Activated CD8-positive, alpha-beta T cell treated with anti-CD3 and anti-CD28 coated beads for 36 hours (primary cell): ENCODE measurements at regions of chr19 and their contacts with region 1.

Region 1: GRCh38 chr19:55503502-55504251 is 15.4 kb downstream of the SSC5D start:
- DNase-seq: peak; percentile 92
- ATAC-seq: peak; percentile 96
- H3K4me3 Mint-ChIP-seq: peak overlapping the region; percentile 70
- H3K27ac Mint-ChIP-seq: peak overlapping the region; percentile 78
- H3K4me1 Mint-ChIP-seq: peaks cover 23% of the 10 kb centered on the region
- H3K27me3 Mint-ChIP-seq: peaks cover 3% of the 10 kb centered on the region
- CTCF ChIP-seq: peak; percentile 99

Region 2: DNA sequence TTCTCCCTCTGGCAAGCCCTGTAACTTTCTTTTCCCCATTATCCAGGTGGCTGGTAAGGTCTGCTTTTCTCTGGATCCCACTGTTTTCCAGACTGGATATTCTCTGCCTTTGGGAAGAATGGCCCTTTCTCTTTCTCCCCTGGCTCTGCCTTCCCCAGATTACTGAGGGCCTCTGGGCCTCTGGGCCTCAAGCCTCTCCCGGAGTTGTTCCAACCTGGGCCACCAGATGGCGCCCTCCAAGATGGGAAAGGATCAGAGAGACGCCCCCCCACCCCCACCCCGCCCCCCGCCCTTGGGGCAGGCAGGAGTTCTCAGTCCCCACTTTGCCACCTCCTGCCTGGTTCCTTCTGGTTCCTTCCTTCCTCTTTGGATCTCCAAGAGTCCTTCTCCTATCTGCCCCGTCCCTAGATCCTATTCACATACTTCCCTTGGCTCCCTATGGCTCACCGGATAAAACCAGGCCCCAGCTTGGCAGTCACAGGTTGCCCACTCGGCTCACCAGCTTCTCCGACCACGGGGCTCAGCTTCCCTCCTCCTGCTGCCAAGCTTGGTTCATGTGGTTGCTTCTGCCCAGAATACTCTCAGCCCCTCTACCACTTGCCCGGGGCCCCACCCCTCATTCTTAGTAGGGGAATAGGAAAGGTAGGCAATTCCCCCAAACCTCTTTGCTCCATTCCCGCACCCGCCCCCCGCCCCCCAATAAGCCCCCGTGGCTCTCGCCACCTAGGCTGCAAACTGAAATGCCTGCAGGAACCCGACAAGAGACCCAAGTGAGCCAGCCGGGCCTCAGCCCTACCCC is 414.9 kb before region 1 on chr19:
- CTCF ChIA-PET with region 1: interaction called, 13 read pairs
- POLR2A ChIA-PET with region 1: no interaction called
- intact Hi-C with region 1: no loop called
- DNase-seq: peak; percentile 89
- ATAC-seq: peak; percentile 59
- H3K4me3 Mint-ChIP-seq: no peak overlapping the region
- H3K27ac Mint-ChIP-seq: no peak overlapping the region
- H3K4me1 Mint-ChIP-seq: peaks cover 14% of the 10 kb centered on the region
- H3K27me3 Mint-ChIP-seq: peaks cover 38% of the 10 kb centered on the region
- CTCF ChIP-seq: peak; percentile 97

Region 3: DNA sequence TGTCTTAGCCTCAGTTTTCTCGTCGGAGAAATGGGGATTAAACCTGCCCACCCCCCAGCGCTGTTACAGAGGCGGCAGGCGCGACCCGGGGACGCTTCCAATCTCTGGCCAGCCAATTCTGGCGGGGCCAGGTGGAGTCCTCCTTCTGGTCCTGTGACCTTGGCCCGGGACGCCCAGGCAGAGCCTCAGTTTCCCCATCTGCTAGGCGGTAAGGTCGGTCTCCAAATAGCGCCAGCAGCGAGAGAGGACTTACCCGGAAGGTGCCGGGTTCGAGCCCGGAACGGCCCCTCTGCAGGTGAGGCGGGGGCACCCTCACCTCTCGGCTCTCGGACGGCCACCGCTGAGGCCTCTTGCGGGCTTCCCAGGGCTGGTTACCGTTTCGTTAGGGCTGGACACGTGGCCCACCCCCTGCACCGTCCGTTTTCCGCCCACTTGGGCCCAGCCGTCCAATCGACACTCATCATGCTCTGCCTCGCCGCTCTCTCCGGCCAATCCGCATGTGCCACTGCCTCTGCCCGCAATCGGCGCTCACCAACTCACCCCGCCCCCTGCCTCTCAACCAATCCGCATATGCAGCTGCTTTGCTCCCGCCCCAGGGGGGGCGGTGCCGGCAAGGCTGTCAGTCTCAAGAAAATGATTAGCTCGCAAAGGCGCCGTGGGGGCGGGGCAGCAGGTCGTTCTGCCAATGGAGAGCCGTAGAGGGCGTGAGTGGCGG is 42.3 kb before region 1 on chr19 and contains the start of gene ISOC2:
- CTCF ChIA-PET with region 1: interaction called, 77 read pairs
- POLR2A ChIA-PET with region 1: interaction called, 3 read pairs
- intact Hi-C with region 1: loop called (anchors 5 kb)
- DNase-seq: peak; percentile 100
- ATAC-seq: peak; percentile 98
- H3K4me3 Mint-ChIP-seq: peak within 1 kb of the TSS; percentile 86
- H3K27ac Mint-ChIP-seq: peak within 1 kb of the TSS; percentile 84
- H3K4me1 Mint-ChIP-seq: peaks cover 15% of the 10 kb centered on the region
- H3K27me3 Mint-ChIP-seq: no peaks in the 10 kb centered on the region
- CTCF ChIP-seq: no peak
- total RNA-seq, gene ISOC2: 29.0 to 29.3 TPM

Region 4: DNA sequence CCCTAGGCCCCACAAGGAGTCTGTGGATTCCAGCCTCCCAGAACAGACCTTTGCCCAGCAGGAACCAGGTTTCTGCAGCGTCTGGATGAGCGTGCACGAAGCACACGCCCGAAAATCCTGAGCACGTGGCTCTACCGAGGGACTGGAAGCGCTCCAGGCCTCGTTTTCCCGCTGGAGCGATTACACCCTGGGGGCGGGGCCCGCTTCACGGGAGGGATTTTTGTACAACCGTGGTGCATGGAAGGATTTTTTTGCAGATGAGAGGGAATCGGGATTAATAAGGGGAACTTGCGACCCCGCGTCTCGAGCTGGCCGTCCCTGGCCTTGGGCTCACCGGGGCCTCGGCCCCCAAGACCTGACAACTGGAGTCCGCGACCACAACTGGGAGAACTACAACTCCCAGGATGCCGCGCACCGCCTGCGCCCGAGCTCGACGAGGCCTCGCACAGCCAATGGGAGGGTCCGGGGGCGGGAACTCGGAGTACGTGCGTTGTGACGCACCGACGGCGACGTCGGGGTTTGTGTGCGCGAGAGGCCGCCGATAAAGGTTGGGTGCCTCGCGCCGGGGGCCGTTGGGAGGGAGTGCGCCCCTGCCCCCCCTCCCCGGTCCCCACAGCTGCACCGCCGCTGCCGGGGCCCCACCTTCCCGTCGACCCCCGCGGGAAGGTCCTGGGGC is 27.4 kb before region 1 on chr19 and contains the start of gene ZNF628:
- CTCF ChIA-PET with region 1: interaction called, 47 read pairs
- POLR2A ChIA-PET with region 1: interaction called, 3 read pairs
- intact Hi-C with region 1: no loop called
- DNase-seq: peak; percentile 99
- ATAC-seq: peak; percentile 93
- H3K4me3 Mint-ChIP-seq: peak within 1 kb of the TSS; percentile 91
- H3K27ac Mint-ChIP-seq: peak within 1 kb of the TSS; percentile 92
- H3K4me1 Mint-ChIP-seq: peaks cover 28% of the 10 kb centered on the region
- H3K27me3 Mint-ChIP-seq: no peaks in the 10 kb centered on the region
- CTCF ChIP-seq: no peak
- total RNA-seq, gene ZNF628: 8.4 to 8.6 TPM

Region 5: GRCh38 chr19:55516878-55517620 is 13.4 kb after region 1 on chr19:
- CTCF ChIA-PET with region 1: interaction called, 23 read pairs
- POLR2A ChIA-PET with region 1: interaction called, 3 read pairs
- intact Hi-C with region 1: no loop called
- DNase-seq: peak; percentile 94
- ATAC-seq: peak; percentile 100
- H3K4me3 Mint-ChIP-seq: peak overlapping the region; percentile 55
- H3K27ac Mint-ChIP-seq: peak overlapping the region; percentile 51
- H3K4me1 Mint-ChIP-seq: peaks cover 3% of the 10 kb centered on the region
- H3K27me3 Mint-ChIP-seq: no peaks in the 10 kb centered on the region
- CTCF ChIP-seq: peak; percentile 66

Region 6: DNA sequence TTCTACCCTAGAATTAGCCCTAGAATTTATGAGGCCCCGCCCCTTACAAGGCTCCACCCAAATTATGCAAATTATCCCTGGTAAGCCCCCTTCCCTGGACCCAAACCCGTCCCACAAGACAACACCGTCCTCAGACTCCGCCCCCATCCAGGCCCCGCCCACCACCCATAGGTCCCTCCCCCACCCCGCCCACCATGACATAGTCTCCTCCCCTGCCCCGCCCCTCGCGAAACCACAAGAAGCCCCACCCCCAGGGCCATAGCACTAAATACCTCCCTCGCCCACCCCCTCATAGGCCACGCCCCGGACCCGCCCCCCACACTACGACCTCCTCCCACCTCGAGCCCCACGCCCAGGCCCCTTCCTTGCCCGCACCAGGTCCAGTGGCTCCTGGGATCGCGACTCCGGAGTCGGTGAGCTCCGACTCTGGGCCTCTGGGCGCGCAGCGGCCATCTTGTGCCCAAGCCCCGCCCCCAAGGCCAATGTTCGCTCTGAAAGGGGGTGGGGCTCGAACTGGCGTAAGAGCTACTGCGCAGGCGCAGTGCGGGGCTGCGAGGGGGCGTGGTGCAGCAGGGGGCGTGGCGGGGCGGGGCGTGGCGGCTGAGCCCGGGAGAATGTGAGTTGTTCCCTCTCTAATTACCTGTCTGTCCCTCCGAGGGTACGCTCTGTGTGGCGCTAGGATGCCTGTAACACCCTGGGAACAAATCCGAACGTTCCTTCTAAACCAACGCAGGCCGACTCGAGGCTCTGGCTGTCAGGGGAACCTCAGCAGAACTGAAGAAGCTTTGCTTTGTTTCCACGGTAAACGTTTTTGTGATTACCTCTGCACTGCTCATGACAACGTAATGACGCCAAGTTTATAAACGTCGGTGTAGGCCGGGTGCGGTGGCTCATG is 120.7 kb after region 1 on chr19 and contains the start of gene ZNF784:
- CTCF ChIA-PET with region 1: interaction called, 13 read pairs
- POLR2A ChIA-PET with region 1: no interaction called
- intact Hi-C with region 1: no loop called
- DNase-seq: peak; percentile 93
- ATAC-seq: peak; percentile 79
- H3K4me3 Mint-ChIP-seq: peak within 1 kb of the TSS; percentile 82
- H3K27ac Mint-ChIP-seq: peak within 1 kb of the TSS; percentile 97
- H3K4me1 Mint-ChIP-seq: peaks cover 51% of the 10 kb centered on the region
- H3K27me3 Mint-ChIP-seq: peaks cover 6% of the 10 kb centered on the region
- CTCF ChIP-seq: no peak
- total RNA-seq, gene ZNF784: 3.6 to 3.7 TPM